ENCODE measurements at regions of chr12 and their contacts with region 1.

Region 1: DNA sequence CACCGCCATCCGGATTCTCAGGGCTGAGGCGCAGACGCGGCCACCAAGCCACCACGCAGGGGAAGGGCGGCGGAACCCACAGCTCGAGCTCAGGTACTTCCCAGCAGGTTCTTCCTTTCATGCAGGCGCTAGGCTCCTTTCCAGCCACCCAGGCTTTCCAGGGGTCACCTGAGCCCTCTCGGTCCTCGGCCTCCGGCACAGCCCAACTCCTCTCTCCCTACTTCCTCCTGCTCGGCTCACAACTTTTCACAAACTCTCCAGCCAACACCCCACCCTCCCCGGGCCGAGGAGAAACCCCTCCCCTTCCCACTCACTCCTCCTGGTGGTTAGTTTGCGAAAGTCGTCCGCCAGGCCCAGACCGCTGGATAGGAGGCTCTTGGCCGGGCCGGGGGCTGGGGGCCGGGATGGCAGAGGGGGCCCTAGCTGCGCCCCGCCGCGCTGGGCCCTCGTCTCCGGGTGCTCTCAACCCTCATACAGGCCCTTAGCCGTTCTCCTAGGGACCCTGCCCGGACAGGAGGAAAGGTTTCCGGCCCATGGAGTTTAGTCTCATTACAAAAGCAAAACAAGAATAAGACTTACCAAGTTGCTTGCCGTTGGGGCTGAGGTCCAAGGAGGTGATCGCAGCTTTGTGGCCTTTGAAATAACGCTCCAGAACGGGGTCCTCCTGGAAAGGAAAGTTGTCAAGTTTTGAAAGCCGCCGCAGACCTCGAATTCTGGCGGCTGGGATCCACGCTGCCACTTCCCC is at the start of gene GALNT4:
- DNase-seq: peak; percentile 75
- ATAC-seq: peak; percentile 78
- H3K4me3 Mint-ChIP-seq: peak within 1 kb of the TSS; percentile 99
- H3K27ac Mint-ChIP-seq: peak within 1 kb of the TSS; percentile 95
- H3K4me1 Mint-ChIP-seq: peaks cover 60% of the 10 kb centered on the region
- H3K27me3 Mint-ChIP-seq: no peaks in the 10 kb centered on the region
- CTCF ChIP-seq: no peak
- total RNA-seq, gene GALNT4: 6.2 and 6.3 TPM in 2 replicates

Region 2: DNA sequence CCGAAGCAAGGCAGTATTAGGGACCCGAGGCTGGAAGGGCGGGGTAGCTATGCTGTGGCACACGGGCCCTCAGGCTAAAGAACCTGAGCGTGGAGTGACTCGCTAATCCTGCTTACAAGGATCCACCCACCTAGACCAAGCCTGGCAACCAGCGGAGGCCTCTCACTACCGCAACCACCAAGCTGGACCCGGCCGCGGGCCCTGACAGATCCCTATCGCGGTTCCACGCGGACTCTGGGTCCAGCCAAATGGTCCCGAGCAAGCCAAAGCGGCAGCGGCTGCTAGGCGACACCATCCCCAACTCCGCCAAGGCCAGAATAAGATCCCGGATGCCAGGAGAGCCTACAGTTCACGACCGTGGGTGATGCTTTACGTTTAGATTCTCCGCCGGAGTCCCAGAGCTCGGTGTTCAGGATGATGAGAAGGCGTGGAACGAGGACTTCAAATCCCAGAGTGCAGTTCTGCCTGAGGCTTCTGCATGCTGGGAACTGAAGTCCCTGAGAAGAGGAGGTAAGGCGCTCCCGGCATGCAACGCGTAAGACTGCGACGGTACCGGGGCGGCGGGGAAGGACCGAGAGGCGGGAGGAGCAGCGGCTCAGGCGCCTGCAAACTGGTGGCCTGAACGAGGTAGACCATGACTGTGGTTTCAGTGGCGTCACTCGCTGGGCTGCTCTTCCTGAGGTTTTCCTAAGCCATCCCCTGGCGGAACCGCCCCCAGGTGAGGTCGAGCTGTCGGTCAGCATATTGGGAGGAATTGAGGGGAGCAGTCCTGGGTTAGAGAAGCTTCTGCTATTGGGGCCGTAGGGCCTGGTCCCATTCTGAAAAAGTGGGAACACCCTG is 1382.7 kb before region 1 on chr12 and contains the starts of genes CEP290 and TMTC3:
- CTCF ChIA-PET with region 1: no interaction called
- POLR2A ChIA-PET with region 1: interaction called, 7 read pairs
- intact Hi-C with region 1: loop called (anchors 1 kb)
- DNase-seq: peak; percentile 81
- ATAC-seq: peak; percentile 94
- H3K4me3 Mint-ChIP-seq: peak within 1 kb of the TSS; percentile 98
- H3K27ac Mint-ChIP-seq: peak within 1 kb of the TSS; percentile 96
- H3K4me1 Mint-ChIP-seq: peaks cover 30% of the 10 kb centered on the region
- H3K27me3 Mint-ChIP-seq: no peaks in the 10 kb centered on the region
- CTCF ChIP-seq: no peak
- total RNA-seq, gene CEP290: 13.7 and 15.0 TPM in 2 replicates
- total RNA-seq, gene TMTC3: 6.3 and 7.4 TPM in 2 replicates

Region 3: GRCh38 chr12:89162704-89163261 is 361.9 kb before region 1 on chr12:
- CTCF ChIA-PET with region 1: interaction called, 3 read pairs
- POLR2A ChIA-PET with region 1: interaction called, 3 read pairs
- intact Hi-C with region 1: loop called (anchors 2 kb)
- DNase-seq: no peak
- ATAC-seq: peak; percentile 56
- H3K4me3 Mint-ChIP-seq: no peak overlapping the region
- H3K27ac Mint-ChIP-seq: no peak overlapping the region
- H3K4me1 Mint-ChIP-seq: peaks cover 28% of the 10 kb centered on the region
- H3K27me3 Mint-ChIP-seq: no peaks in the 10 kb centered on the region
- CTCF ChIP-seq: no peak

Region 4: GRCh38 chr12:89461649-89462612 is 62.8 kb before region 1 on chr12:
- CTCF ChIA-PET with region 1: interaction called, 13 read pairs
- POLR2A ChIA-PET with region 1: no interaction called
- intact Hi-C with region 1: no loop called
- DNase-seq: no peak
- ATAC-seq: peak; percentile 77
- H3K4me3 Mint-ChIP-seq: peak overlapping the region; percentile 41
- H3K27ac Mint-ChIP-seq: no peak overlapping the region
- H3K4me1 Mint-ChIP-seq: peaks cover 16% of the 10 kb centered on the region
- H3K27me3 Mint-ChIP-seq: no peaks in the 10 kb centered on the region
- CTCF ChIP-seq: peak; percentile 28

Region 5: DNA sequence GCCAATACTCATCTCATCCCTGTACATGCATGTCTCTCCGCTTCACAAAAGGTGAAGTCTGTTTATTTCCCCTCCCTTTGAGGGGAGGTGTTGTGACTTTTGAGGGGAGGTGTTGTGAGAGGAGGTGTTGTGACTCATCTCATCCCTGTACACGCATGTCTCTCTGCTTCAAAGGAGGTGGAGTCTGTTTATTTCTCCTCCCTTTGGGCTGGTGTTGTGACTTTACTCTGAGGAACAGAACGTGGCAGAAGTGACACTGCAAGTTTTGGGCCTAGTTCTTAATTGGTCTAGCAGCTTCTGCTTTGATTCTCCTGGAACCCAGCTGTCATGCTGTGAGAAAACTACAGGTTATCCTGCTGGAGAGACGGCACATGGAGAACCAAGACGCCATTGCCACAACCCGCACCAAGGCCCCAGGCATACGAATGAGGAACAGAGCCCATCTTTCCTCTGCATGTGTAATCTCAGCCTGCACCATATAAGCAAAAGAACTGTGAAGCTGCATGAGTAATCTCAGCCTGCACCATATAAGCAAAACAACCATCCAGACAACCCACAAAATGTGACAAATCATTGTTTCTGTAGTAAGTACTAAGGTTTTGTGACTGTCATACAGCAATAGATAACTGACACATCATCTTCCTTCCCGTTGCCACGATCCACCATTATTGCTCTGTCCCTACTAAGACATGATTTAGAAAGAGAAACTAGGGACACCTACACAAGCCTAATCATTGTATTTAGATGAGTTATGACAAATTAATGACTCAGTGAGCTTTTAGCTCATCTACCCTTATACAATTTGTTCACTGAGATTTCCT is 30.1 kb before region 1 on chr12:
- CTCF ChIA-PET with region 1: interaction called, 3 read pairs
- POLR2A ChIA-PET with region 1: interaction called, 6 read pairs
- intact Hi-C with region 1: loop called (anchors 2 kb)
- DNase-seq: no peak
- ATAC-seq: peak; percentile 70
- H3K4me3 Mint-ChIP-seq: peak overlapping the region; percentile 3
- H3K27ac Mint-ChIP-seq: peak overlapping the region; percentile 65
- H3K4me1 Mint-ChIP-seq: peaks cover 37% of the 10 kb centered on the region
- H3K27me3 Mint-ChIP-seq: no peaks in the 10 kb centered on the region
- CTCF ChIP-seq: no peak